Gastrocnemius medialis (tissue), 4 donors: ENCODE measurements at regions of chr3 and their contacts with region 1.

Region 1: DNA sequence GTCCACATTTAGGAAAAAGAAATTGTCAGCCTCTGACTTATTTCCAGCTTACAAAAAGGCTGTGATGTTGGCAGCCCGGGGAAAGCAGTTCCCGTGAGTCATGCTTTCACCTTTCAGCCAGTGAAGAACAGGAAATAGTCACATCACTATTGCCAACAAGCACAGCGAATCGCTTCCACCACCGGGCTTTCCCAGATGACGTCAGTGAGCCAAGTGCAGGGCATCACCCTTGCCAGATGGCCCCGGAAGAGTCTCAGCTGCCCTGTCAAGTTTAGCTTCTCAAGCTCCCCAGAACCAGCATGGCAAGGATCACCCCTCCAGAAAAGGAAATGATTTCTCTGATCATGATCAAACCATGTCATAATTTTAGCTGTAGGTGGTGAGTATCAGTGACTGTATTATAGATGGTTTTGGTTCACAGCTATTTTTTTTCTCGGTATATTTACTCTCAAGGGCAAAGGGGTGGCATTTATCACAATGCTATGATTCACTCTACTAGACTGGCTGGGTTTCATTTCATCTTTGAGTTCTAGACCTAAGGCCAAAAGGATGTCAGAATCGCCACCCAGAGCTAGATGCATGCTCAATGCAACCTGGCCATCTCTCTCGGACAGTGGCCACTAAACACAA is 32.9 kb downstream of the B3GNT5 start:
- DNase-seq: peak; percentile 82 to 93
- ATAC-seq: peak; percentile 70
- H3K4me3 ChIP-seq: peak overlapping the region; percentile 12 to 28 (median 16)
- H3K27ac ChIP-seq: peak overlapping the region; percentile 89 to 99 (median 94)
- H3K4me1 ChIP-seq: peaks cover 38 to 40% of the 10 kb centered on the region in 2 donors
- H3K27me3 ChIP-seq: no peaks in the 10 kb centered on the region
- CTCF ChIP-seq: no peak
- POLR2A ChIP-seq: peak; percentile 24 to 49

Region 2: DNA sequence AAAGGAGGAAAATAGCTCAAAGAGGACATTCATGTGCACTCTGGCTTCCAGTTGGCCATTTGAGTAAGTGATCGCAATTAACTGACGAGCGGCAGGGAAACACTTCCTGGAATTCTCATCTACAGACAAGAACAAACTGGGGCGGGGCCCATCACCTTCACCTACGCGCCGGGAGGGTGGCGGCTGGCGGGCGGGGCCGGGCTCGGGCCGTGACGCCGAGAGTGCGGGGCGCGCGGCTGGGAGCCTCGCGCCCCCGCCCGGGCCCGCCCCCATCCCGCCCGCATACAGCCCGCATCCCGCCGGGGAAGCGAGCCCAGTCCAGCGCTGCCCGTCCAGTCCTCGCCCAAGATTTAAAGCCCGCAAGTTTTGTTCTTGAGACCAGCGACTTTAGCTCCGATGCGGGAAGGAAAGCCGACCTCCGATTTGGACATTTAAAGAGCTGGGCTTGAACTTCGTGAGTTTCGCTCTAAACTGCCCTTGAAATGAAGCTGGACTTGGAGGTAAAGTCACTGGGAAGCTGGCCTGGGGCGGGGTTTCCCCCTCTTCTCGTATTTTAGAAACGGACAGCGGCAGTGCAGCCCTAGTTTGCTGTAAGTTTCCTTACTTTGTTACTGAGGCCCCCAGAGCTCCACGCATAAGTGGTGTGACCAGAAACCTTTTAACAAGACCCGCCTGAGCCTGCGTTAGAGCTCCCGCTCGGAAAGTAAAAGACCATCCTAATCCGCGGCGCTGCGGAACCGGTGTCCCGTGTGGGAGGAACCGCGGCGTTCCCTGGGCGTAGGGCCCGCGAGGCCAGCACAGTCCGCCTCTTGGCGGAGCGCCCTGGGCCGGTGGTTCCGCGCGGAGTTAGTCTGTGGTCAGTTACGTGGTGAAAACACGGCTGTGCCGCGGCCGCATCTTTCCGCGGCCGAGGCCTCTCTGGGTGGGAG is 32.7 kb before region 1 on chr3 and contains the start of gene B3GNT5:
- in situ Hi-C with region 1: no loop called
- intact Hi-C with region 1: loop called (anchors 2 kb)
- DNase-seq: peak; percentile 68 to 79
- ATAC-seq: peak; percentile 76 to 81
- H3K4me3 ChIP-seq: peak within 1 kb of the TSS; percentile 72 to 86 (median 81)
- H3K27ac ChIP-seq: peak within 1 kb of the TSS; percentile 88 to 98 (median 91)
- H3K4me1 ChIP-seq: peaks cover 19 to 24% of the 10 kb centered on the region in 2 donors
- H3K27me3 ChIP-seq: no peaks in the 10 kb centered on the region
- CTCF ChIP-seq: no peak
- POLR2A ChIP-seq: peak; percentile 58 to 61
- total RNA-seq, gene B3GNT5: 18.2 to 41.2 (median 26.0) TPM

Region 3: GRCh38 chr3:183298701-183299153 is 12.8 kb after region 1 on chr3:
- in situ Hi-C with region 1: no loop called
- intact Hi-C with region 1: loop called (anchors 1 kb)
- DNase-seq: peak; percentile 89 to 95
- ATAC-seq: peak; percentile 66 to 68
- H3K4me3 ChIP-seq: no peak overlapping the region
- H3K27ac ChIP-seq: peak overlapping the region; percentile 89 to 99 (median 94)
- H3K4me1 ChIP-seq: peaks cover 63 to 78% of the 10 kb centered on the region in 2 donors
- H3K27me3 ChIP-seq: no peaks in the 10 kb centered on the region
- CTCF ChIP-seq: no peak
- POLR2A ChIP-seq: peak; percentile 23 to 52

Region 4: GRCh38 chr3:183349421-183350157 is 63.6 kb after region 1 on chr3:
- in situ Hi-C with region 1: no loop called
- intact Hi-C with region 1: no loop called
- DNase-seq: no peak
- ATAC-seq: no peak
- H3K4me3 ChIP-seq: no peak overlapping the region
- H3K27ac ChIP-seq: no peak overlapping the region
- H3K4me1 ChIP-seq: no peaks in the 10 kb centered on the region
- H3K27me3 ChIP-seq: no peaks in the 10 kb centered on the region
- CTCF ChIP-seq: no peak
- POLR2A ChIP-seq: no peak

Region 5: GRCh38 chr3:183377307-183377959 is 91.5 kb after region 1 on chr3:
- in situ Hi-C with region 1: no loop called
- intact Hi-C with region 1: no loop called
- DNase-seq: no peak
- ATAC-seq: no peak
- H3K4me3 ChIP-seq: no peak overlapping the region
- H3K27ac ChIP-seq: no peak overlapping the region
- H3K4me1 ChIP-seq: no peaks in the 10 kb centered on the region
- H3K27me3 ChIP-seq: no peaks in the 10 kb centered on the region
- CTCF ChIP-seq: no peak
- POLR2A ChIP-seq: no peak

Region 6: GRCh38 chr3:183635431-183636220 is 349.7 kb after region 1 on chr3 and contains the start of gene KLHL24:
- in situ Hi-C with region 1: no loop called
- intact Hi-C with region 1: loop called (anchors 5 kb)
- DNase-seq: peak; percentile 95 to 96
- ATAC-seq: peak; percentile 78 to 82
- H3K4me3 ChIP-seq: peak within 1 kb of the TSS; percentile 95 to 99 (median 98)
- H3K27ac ChIP-seq: peak within 1 kb of the TSS; percentile 99 to 100 (median 100)
- H3K4me1 ChIP-seq: peaks cover 31 to 34% of the 10 kb centered on the region in 2 donors
- H3K27me3 ChIP-seq: no peaks in the 10 kb centered on the region
- CTCF ChIP-seq: no peak
- POLR2A ChIP-seq: peak; percentile 100
- total RNA-seq, gene KLHL24: 118 to 301 (median 222) TPM

Region 7: GRCh38 chr3:184135149-184135910 is 849.4 kb after region 1 on chr3 and contains the start of gene EIF2B5:
- in situ Hi-C with region 1: no loop called
- intact Hi-C with region 1: loop called (anchors 10 kb)
- DNase-seq: peak; percentile 90 to 91
- ATAC-seq: peak; percentile 89 to 94
- H3K4me3 ChIP-seq: peak within 1 kb of the TSS; percentile 65 to 97 (median 80)
- H3K27ac ChIP-seq: peak within 1 kb of the TSS; percentile 88 to 97 (median 93)
- H3K4me1 ChIP-seq: peaks cover 15 to 25% of the 10 kb centered on the region in 2 donors
- H3K27me3 ChIP-seq: no peaks in the 10 kb centered on the region
- CTCF ChIP-seq: peak in 4 of 5 experiments; percentile 32 to 55 (median 47)
- POLR2A ChIP-seq: peak; percentile 70 to 72
- total RNA-seq, gene EIF2B5: 42.6 to 56.8 (median 53.4) TPM